Activated B cell treated with CpG ODN at 0.5 μM for 24 hours (primary cell): ENCODE measurements at regions of chr2 and their contacts with region 1.

Region 1: DNA sequence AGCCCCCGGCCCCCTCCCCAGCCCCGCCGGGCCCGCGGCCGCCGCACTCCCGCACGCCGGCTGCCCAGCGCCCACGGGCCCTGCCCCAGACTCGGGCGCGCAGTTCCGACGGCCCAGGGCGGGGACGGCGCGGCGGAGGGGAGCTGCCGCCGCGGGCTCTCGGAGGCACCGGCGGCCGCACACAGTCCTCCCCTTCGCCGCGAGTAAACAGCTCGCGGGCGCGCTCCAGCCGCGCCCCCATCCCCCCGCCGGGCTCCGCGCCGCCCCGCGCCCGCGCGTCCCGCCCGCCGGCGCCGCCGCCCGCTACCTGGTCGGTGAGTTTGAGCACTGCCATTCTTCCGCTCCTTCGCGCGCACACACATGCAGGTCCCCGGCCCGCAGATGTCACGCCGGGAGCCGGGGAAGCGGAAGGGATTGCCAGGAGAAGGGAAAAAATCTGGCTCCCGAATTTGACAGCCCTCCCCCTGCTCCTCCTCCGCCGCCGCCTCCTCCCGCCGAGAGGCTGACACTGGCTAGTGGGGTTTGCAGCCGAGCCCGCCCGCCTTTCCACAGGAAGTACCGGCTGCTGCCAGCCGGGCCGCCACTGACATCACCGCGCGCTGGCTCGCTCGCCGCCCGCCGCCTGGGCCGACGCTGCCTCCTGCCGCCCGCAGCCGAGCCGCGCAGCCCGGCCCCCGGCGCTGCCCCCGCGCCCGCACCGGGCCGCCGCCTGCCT is at the start of gene ANKRD44:
- DNase-seq: peak; percentile 82
- ATAC-seq: peak; percentile 77
- H3K4me3 Mint-ChIP-seq: peak within 1 kb of the TSS; percentile 95
- H3K27ac Mint-ChIP-seq: peak within 1 kb of the TSS; percentile 95
- H3K4me1 Mint-ChIP-seq: peaks cover 48% of the 10 kb centered on the region
- H3K27me3 Mint-ChIP-seq: no peaks in the 10 kb centered on the region
- CTCF ChIP-seq: no peak
- total RNA-seq, gene ANKRD44: 154 and 185 TPM in 2 replicates

Region 2: GRCh38 chr2:197130318-197130717 is 180.1 kb before region 1 on chr2:
- CTCF ChIA-PET with region 1: no interaction called
- POLR2A ChIA-PET with region 1: interaction called, 7 read pairs
- intact Hi-C with region 1: loop called (anchors 1 kb)
- DNase-seq: no peak
- ATAC-seq: peak; percentile 69
- H3K4me3 Mint-ChIP-seq: peak overlapping the region; percentile 82
- H3K27ac Mint-ChIP-seq: peak overlapping the region; percentile 98
- H3K4me1 Mint-ChIP-seq: peaks cover 71% of the 10 kb centered on the region
- H3K27me3 Mint-ChIP-seq: no peaks in the 10 kb centered on the region
- CTCF ChIP-seq: no peak

Region 3: DNA sequence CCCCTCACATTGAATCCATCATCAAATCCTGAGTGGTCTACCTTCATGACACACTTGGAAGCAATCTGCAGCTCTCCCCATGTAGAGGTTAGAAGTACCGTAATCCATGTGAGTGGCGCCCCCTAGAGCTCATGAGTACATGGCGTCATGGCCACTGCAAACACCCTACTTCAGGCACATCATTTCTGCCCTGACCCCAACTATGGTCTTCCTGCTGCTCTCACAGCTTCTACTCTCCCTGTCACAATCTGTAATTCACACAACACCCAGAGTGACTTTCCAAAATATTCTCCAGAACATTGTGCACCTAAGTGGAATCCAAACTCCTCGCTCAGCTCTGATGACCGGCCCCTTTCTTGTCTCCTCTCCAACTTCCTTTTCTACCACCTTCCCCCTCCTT is 141.7 kb before region 1 on chr2:
- CTCF ChIA-PET with region 1: interaction called, 18 read pairs
- POLR2A ChIA-PET with region 1: interaction called, 3 read pairs
- intact Hi-C with region 1: no loop called
- DNase-seq: peak; percentile 47
- ATAC-seq: peak; percentile 82
- H3K4me3 Mint-ChIP-seq: no peak overlapping the region
- H3K27ac Mint-ChIP-seq: peak overlapping the region; percentile 78
- H3K4me1 Mint-ChIP-seq: peaks cover 77% of the 10 kb centered on the region
- H3K27me3 Mint-ChIP-seq: no peaks in the 10 kb centered on the region
- CTCF ChIP-seq: no peak

Region 4: GRCh38 chr2:197209742-197210408 is 100.6 kb before region 1 on chr2:
- CTCF ChIA-PET with region 1: interaction called, 26 read pairs
- POLR2A ChIA-PET with region 1: interaction called, 62 read pairs
- intact Hi-C with region 1: loop called (anchors 2 kb)
- DNase-seq: no peak
- ATAC-seq: peak; percentile 13
- H3K4me3 Mint-ChIP-seq: peak overlapping the region; percentile 66
- H3K27ac Mint-ChIP-seq: peak overlapping the region; percentile 98
- H3K4me1 Mint-ChIP-seq: peaks cover 99% of the 10 kb centered on the region
- H3K27me3 Mint-ChIP-seq: no peaks in the 10 kb centered on the region
- CTCF ChIP-seq: no peak

Region 5: DNA sequence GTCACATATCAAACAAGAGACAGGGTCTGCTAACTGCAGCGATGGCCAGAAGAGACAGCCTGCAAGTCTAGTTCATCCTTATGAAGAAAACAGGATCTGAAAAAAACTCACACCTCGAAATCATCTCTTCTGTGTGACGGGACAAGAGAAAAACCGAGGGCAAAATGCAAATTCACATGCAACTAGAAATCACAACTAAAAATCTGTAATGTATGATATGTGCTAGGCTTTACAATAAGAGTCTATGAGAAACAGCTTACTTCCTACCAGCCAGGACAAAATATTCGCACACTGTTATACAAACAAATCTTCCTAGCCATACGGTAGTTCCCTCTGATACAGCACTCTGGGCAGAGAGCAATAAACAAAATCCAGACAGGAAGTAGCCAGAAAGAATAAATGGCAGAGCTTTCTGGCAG is 48.6 kb before region 1 on chr2:
- CTCF ChIA-PET with region 1: interaction called, 35 read pairs
- POLR2A ChIA-PET with region 1: interaction called, 98 read pairs
- intact Hi-C with region 1: no loop called
- DNase-seq: no peak
- ATAC-seq: peak; percentile 76
- H3K4me3 Mint-ChIP-seq: peak overlapping the region; percentile 66
- H3K27ac Mint-ChIP-seq: peak overlapping the region; percentile 80
- H3K4me1 Mint-ChIP-seq: peaks cover 84% of the 10 kb centered on the region
- H3K27me3 Mint-ChIP-seq: no peaks in the 10 kb centered on the region
- CTCF ChIP-seq: no peak

Region 6: GRCh38 chr2:197356136-197356535 is 45.7 kb after region 1 on chr2:
- CTCF ChIA-PET with region 1: no interaction called
- POLR2A ChIA-PET with region 1: no interaction called
- intact Hi-C with region 1: loop called (anchors 5 kb)
- DNase-seq: no peak
- ATAC-seq: peak; percentile 45
- H3K4me3 Mint-ChIP-seq: no peak overlapping the region
- H3K27ac Mint-ChIP-seq: no peak overlapping the region
- H3K4me1 Mint-ChIP-seq: no peaks in the 10 kb centered on the region
- H3K27me3 Mint-ChIP-seq: no peaks in the 10 kb centered on the region
- CTCF ChIP-seq: no peak